PC-9 (cell line): ENCODE measurements at regions of chr2 and their contacts with region 1.

Region 1: DNA sequence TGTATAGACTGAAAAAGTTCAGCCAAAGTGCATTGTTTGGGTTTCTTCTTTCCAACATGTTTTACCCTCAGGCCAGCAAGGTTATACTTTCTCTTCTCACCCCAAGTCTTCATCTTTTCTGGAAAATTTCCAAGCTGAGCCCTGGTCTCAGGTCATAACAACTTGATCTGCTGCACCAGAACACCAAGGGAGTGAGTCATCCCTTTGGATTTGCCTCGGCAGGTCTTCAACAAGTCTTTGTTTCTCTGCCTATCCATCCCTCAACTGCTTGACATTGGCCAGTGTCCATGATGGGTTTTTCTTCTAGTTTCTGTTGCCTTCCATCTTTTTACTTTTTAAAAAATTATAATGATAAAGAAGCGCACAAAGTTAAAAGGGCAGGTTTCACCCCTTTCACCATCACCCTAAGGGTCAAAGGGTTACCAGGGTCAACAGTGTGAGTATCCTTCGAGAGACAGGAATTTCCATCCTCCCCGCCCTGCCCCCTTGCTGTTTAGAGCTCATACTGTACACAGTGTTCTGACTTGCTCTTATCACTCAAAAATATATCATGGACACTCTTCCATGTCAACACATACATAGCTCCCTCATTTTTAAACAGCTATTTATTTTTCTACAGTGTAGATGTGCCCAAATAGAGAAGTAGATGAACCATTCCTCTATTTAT is 5.7 kb upstream of the SPATS2L start:
- DNase-seq: peak; percentile 73 to 92
- H3K4me3 ChIP-seq: no peak overlapping the region
- H3K27ac ChIP-seq: peak overlapping the region; percentile 53
- H3K4me1 ChIP-seq: peaks cover 54% of the 10 kb centered on the region
- H3K27me3 ChIP-seq: no peaks in the 10 kb centered on the region
- CTCF ChIP-seq: no peak

Region 2: GRCh38 chr2:200039724-200040650 is 260.8 kb before region 1 on chr2:
- CTCF ChIA-PET with region 1: no interaction called
- POLR2A ChIA-PET with region 1: no interaction called
- intact Hi-C with region 1: loop called (anchors 5 kb)
- DNase-seq: no peak
- H3K4me3 ChIP-seq: no peak overlapping the region
- H3K27ac ChIP-seq: no peak overlapping the region
- H3K4me1 ChIP-seq: peaks cover 12% of the 10 kb centered on the region; the same call in 1 of the 2 replicates
- H3K27me3 ChIP-seq: no peaks in the 10 kb centered on the region
- CTCF ChIP-seq: no peak

Region 3: DNA sequence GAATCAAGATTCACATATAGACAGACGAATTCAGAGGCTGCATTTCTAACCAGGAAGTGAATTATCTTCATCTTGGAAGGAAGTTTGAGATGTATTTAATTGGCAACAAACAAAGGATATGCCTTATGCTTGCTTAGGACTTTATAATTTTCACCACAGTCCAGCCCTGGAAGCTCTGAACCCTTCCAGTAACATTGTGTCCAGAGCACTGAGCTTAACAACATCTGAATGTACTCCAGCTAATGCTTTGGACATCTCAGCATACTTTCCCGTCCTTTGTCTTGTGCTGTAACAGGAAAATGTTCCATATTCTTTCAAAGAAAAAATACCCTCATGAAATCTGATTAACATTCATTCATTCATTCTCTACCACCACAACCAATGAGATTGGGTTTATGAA is 130.6 kb before region 1 on chr2:
- CTCF ChIA-PET with region 1: no interaction called
- POLR2A ChIA-PET with region 1: no interaction called
- intact Hi-C with region 1: no loop called
- DNase-seq: no peak
- H3K4me3 ChIP-seq: no peak overlapping the region
- H3K27ac ChIP-seq: no peak overlapping the region
- H3K4me1 ChIP-seq: no peaks in the 10 kb centered on the region
- H3K27me3 ChIP-seq: no peaks in the 10 kb centered on the region
- CTCF ChIP-seq: no peak

Region 4: GRCh38 chr2:200259577-200260008 is 41.2 kb before region 1 on chr2:
- CTCF ChIA-PET with region 1: no interaction called
- POLR2A ChIA-PET with region 1: no interaction called
- intact Hi-C with region 1: loop called (anchors 1 kb)
- DNase-seq: peak; percentile 56 to 99
- H3K4me3 ChIP-seq: peak overlapping the region; percentile 39; the same call in 1 of the 2 replicates
- H3K27ac ChIP-seq: peak overlapping the region; percentile 86
- H3K4me1 ChIP-seq: peaks cover 38% of the 10 kb centered on the region
- H3K27me3 ChIP-seq: no peaks in the 10 kb centered on the region
- CTCF ChIP-seq: no peak

Region 5: DNA sequence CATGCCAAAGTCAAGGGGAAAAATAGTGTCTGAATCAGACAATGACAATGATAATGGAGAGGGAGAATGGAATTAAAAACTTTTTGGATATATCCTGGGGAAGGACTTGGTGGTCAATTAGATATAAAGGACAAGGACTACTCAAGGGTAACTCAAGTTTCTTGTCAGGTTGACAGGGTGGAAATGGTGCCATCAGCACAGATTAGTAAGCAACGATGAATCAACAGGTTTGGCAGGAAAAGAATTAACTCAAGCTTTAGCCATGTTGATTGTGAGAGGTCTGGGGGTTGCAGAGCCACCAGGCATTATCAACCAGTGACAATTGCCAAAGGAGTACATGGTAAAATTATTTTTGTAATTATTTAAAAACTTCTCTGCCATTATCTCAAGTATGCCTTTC is 30.0 kb before region 1 on chr2:
- CTCF ChIA-PET with region 1: no interaction called
- POLR2A ChIA-PET with region 1: no interaction called
- intact Hi-C with region 1: no loop called
- DNase-seq: no peak
- H3K4me3 ChIP-seq: no peak overlapping the region
- H3K27ac ChIP-seq: no peak overlapping the region
- H3K4me1 ChIP-seq: no peaks in the 10 kb centered on the region
- H3K27me3 ChIP-seq: no peaks in the 10 kb centered on the region
- CTCF ChIP-seq: no peak

Region 6: GRCh38 chr2:200352636-200353035 is 51.9 kb after region 1 on chr2:
- CTCF ChIA-PET with region 1: no interaction called
- POLR2A ChIA-PET with region 1: interaction called, 12 read pairs
- intact Hi-C with region 1: no loop called
- DNase-seq: peak; percentile 49 to 85
- H3K4me3 ChIP-seq: no peak overlapping the region
- H3K27ac ChIP-seq: peak overlapping the region; percentile 66
- H3K4me1 ChIP-seq: peaks cover 45% of the 10 kb centered on the region
- H3K27me3 ChIP-seq: no peaks in the 10 kb centered on the region
- CTCF ChIP-seq: no peak